ENCODE measurements at regions of chr5 and their contacts with region 1.

Region 1: DNA sequence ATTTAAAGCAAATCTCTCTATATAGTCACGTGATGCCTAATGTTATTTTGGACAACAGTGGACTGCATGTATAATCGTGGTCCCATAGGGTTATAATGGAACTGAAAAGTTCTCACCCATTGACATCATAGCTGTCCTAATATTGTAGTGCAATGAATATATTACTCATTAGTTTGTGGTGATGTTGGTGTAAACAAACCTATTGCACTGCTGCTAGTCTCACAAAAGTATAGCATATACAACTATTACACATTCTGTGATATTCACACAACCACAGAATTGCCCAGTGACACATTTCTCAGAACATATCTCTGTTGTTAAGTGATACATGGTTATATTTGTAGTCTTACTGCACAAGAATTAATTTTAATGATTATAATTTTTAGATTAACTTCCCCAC is 37.7 kb downstream of the IPO11 start:
- DNase-seq: no peak
- H3K4me3 ChIP-seq: no peak overlapping the region
- H3K27ac ChIP-seq: no peak overlapping the region
- H3K4me1 ChIP-seq: no peaks in the 10 kb centered on the region
- H3K27me3 ChIP-seq: no peaks in the 10 kb centered on the region
- CTCF ChIP-seq: no peak
- POLR2A ChIP-seq: no peak

Region 2: GRCh38 chr5:62779010-62779422 is 328.8 kb after region 1 on chr5:
- intact Hi-C with region 1: loop called (anchors 5 to 10 kb)
- DNase-seq: peak in 5 of 7 donors; percentile 12 to 32 (median 30)
- H3K4me3 ChIP-seq: no peak overlapping the region
- H3K27ac ChIP-seq: no peak overlapping the region
- H3K4me1 ChIP-seq: no peaks in the 10 kb centered on the region
- H3K27me3 ChIP-seq: no peaks in the 10 kb centered on the region
- CTCF ChIP-seq: peak; percentile 56 to 80 (median 70)
- POLR2A ChIP-seq: no peak

Measured in adrenal gland (tissue), 19 donors.